Activated CD4-positive, alpha-beta memory T cell treated with anti-CD3 and anti-CD28 coated beads for 36 hours (primary cell): ENCODE measurements at regions of chr20 and their contacts with region 1.

Region 1: GRCh38 chr20:31605031-31605901 is at the start of gene ID1:
- DNase-seq: peak; percentile 92
- H3K4me3 Mint-ChIP-seq: peak within 1 kb of the TSS; percentile 87
- H3K27ac Mint-ChIP-seq: no peak within 1 kb of the TSS
- H3K4me1 Mint-ChIP-seq: peaks cover 33% of the 10 kb centered on the region
- H3K27me3 Mint-ChIP-seq: peaks cover 47% of the 10 kb centered on the region
- total RNA-seq, gene ID1: 0.90 to 1.3 TPM

Region 2: DNA sequence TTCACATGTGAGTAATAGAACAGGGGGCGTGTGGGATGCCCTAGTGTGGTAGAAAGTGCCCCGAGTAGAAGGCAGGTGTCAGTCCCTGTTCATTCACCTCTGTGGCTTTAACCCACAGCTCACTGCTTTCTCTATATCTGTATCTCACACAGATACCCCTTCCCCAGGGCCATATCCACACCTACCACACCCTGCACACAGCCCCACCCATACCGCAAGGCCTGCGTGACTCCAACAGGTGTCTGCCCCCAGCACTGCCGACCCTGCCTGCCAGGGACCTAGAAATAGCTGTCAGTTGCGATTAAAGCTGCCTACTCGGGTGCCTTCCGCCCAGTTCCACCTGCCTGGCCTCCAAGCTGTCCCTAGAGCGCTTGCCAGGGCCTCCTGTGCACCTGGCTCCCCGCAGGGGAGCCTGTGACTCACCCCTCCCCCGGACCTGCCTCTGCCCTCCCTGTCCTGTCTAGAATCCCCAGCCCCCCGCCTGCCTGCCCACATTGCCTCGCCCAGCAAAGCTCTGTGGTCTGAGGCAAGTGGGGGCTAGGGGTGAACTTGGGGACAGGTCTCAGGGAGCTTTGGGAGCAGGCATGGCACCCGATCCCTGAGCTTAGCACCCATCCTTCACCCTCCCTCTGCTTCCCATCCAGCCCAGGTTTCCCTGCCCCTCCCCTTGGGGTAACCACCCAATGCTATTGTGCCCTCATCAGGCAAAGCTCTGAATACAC is 38.4 kb before region 1 on chr20:
- CTCF ChIA-PET with region 1: interaction called, 1,211 read pairs
- POLR2A ChIA-PET with region 1: interaction called, 10 read pairs
- intact Hi-C with region 1: loop called (anchors 1 kb)
- DNase-seq: peak; percentile 48
- H3K4me3 Mint-ChIP-seq: no peak overlapping the region
- H3K27ac Mint-ChIP-seq: peak overlapping the region; percentile 40
- H3K4me1 Mint-ChIP-seq: peaks cover 27% of the 10 kb centered on the region
- H3K27me3 Mint-ChIP-seq: no peaks in the 10 kb centered on the region

Region 3: GRCh38 chr20:31572701-31573554 is 32.3 kb before region 1 on chr20:
- CTCF ChIA-PET with region 1: interaction called, 1,211 read pairs
- POLR2A ChIA-PET with region 1: interaction called, 31 read pairs
- intact Hi-C with region 1: loop called (anchors 1 kb)
- DNase-seq: peak; percentile 94
- H3K4me3 Mint-ChIP-seq: peak overlapping the region; percentile 88
- H3K27ac Mint-ChIP-seq: peak overlapping the region; percentile 85
- H3K4me1 Mint-ChIP-seq: peaks cover 25% of the 10 kb centered on the region
- H3K27me3 Mint-ChIP-seq: no peaks in the 10 kb centered on the region

Region 4: GRCh38 chr20:31593225-31594002 is 11.9 kb before region 1 on chr20:
- CTCF ChIA-PET with region 1: interaction called, 6 read pairs
- POLR2A ChIA-PET with region 1: no interaction called
- intact Hi-C with region 1: loop called (anchors 1 kb)
- DNase-seq: peak; percentile 70
- H3K4me3 Mint-ChIP-seq: no peak overlapping the region
- H3K27ac Mint-ChIP-seq: no peak overlapping the region
- H3K4me1 Mint-ChIP-seq: peaks cover under 1% of the 10 kb centered on the region
- H3K27me3 Mint-ChIP-seq: peaks cover 10% of the 10 kb centered on the region

Region 5: DNA sequence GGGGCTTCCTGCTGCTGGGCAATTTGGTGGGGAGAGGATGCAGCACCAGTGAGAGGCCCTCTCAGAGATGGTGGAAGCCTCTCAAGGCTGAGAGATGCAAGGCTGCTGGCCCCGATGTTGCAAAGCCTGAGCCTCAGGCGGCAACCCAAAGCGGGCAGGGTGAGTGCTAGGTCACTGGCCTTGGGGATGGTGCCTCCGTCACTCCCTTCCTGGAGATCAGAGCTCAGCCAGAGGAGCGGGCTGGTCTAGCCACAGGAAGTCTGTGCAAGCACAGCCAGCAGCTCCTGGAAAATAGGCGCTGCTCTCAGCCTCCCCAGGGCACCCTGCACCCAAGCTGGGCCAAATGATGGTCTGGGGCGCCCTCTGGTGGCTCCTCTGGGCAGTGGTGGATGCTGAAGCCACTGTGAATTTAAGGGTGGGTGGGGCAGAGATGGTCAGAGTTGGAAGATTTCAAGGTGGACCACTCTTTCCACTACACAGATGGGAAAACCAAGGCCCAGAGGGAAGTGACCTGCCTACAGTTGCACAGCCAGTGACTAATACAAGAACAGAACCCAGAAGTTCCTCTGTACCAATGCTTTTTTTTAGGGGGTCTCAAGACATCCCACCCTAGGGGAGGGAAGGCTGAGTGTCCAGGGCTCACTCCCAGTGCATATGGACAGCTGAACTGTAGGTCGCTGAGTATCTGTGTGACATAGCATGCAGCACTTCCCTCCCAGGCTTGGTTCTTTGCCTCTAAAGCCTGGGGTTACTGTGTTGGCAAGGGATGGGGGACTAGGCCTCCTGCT is 1047.7 kb after region 1 on chr20:
- CTCF ChIA-PET with region 1: no interaction called
- POLR2A ChIA-PET with region 1: no interaction called
- intact Hi-C with region 1: no loop called
- DNase-seq: peak; percentile 92
- H3K4me3 Mint-ChIP-seq: no peak overlapping the region
- H3K27ac Mint-ChIP-seq: peak overlapping the region; percentile 13
- H3K4me1 Mint-ChIP-seq: peaks cover 9% of the 10 kb centered on the region
- H3K27me3 Mint-ChIP-seq: no peaks in the 10 kb centered on the region